ENCODE measurements at regions of chr10 and their contacts with region 1.

Region 1: GRCh38 chr10:102476466-102477141 is 25.3 kb upstream of the C10orf95 start:
- DNase-seq: peak in 2 of 5 donors; percentile 20 to 23
- ATAC-seq: no peak
- H3K4me3 ChIP-seq: no peak overlapping the region
- H3K27ac ChIP-seq: no peak overlapping the region
- H3K4me1 ChIP-seq: peaks cover 0 to 18% (median 6%) of the 10 kb centered on the region in 12 donors
- H3K27me3 ChIP-seq: no peaks in the 10 kb centered on the region
- CTCF ChIP-seq: no peak
- POLR2A ChIP-seq: no peak

Region 2: DNA sequence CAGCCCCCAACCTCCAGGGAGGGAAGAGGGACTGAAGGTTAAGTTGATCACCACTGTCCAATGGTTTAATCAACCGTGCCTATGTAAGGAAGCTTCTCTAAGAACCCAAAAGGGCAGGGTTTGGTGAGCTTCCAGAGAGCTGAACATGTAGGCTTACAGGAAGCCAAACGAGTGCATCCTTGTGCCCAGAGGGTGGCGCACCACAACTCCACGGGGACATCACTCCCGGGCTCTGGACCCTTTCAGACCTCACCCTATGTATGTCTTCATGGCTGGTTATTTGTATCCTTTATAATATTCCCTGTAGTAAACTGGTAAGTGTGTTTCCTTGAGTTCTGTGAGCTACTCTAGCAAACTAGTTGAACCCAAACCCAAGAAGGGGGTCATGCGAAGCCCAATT is 92.6 kb before region 1 on chr10:
- intact Hi-C with region 1: loop called in 1 of 10 experiments (anchors 10 kb)
- DNase-seq: no peak
- ATAC-seq: no peak
- H3K4me3 ChIP-seq: no peak overlapping the region
- H3K27ac ChIP-seq: no peak overlapping the region
- H3K4me1 ChIP-seq: peaks cover 0 to 17% (median 0%) of the 10 kb centered on the region in 12 donors
- H3K27me3 ChIP-seq: no peaks in the 10 kb centered on the region
- CTCF ChIP-seq: no peak
- POLR2A ChIP-seq: no peak

Region 3: DNA sequence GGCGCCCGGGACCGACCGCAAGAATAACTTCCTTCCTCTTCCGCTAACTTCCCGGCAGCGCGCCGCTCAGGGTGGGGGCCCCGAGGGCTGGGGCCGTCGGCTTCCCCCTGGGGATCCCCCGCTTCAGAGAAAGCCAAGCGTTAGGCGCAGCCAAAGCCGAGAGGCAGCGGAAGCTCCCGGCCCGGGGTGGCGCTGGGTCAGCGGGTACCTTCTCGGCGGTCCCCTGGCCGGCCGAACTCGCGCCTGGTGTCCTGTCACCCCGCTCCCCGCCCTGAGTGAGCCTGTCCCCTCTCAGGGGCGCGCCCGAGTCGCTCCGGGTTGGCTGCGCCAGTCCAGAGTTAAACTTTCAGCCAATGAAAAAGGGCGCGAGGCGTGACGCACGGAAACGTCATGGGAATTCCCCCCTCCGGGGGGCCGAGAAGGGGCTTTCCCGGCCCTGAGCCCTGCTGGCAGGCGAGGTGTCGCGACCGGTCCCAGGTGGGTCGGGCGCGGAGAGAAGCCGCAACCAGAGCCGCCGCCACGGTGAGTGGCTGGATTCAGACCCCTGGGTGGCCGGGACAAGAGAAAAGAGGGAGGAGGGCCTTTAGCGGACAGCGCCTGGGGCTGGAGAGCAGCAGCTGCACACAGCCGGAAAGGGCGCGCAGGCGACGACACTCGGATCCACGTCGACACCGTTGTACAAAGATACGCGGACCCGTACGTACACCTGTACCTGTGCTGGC is 82.4 kb before region 1 on chr10:
- intact Hi-C with region 1: loop called in 7 of 10 experiments (anchors 1 to 10 kb)
- DNase-seq: peak; percentile 96 to 98 (median 97)
- ATAC-seq: peak; percentile 84 to 94 (median 92)
- H3K4me3 ChIP-seq: peak overlapping the region; percentile 50 to 91 (median 75)
- H3K27ac ChIP-seq: peak overlapping the region; percentile 89 to 99 (median 96)
- H3K4me1 ChIP-seq: peaks cover 3 to 42% (median 26%) of the 10 kb centered on the region in 12 donors
- H3K27me3 ChIP-seq: no peaks in the 10 kb centered on the region
- CTCF ChIP-seq: peak in 10 of 12 donors; percentile 1 to 98 (median 94)
- POLR2A ChIP-seq: peak in 1 of 2 donors; percentile 81

Region 4: GRCh38 chr10:102399217-102400089 is 77.2 kb before region 1 on chr10:
- intact Hi-C with region 1: loop called in 6 of 10 experiments (anchors 1 to 5 kb)
- DNase-seq: peak; percentile 87 to 95 (median 92)
- ATAC-seq: peak; percentile 60 to 80 (median 73)
- H3K4me3 ChIP-seq: peak overlapping the region; percentile 18 to 85 (median 70)
- H3K27ac ChIP-seq: peak overlapping the region; percentile 70 to 99 (median 86)
- H3K4me1 ChIP-seq: peaks cover 0 to 44% (median 26%) of the 10 kb centered on the region in 12 donors
- H3K27me3 ChIP-seq: no peaks in the 10 kb centered on the region
- CTCF ChIP-seq: peak; percentile 92 to 99 (median 95)
- POLR2A ChIP-seq: peak in 1 of 2 donors; percentile 46

Region 5: DNA sequence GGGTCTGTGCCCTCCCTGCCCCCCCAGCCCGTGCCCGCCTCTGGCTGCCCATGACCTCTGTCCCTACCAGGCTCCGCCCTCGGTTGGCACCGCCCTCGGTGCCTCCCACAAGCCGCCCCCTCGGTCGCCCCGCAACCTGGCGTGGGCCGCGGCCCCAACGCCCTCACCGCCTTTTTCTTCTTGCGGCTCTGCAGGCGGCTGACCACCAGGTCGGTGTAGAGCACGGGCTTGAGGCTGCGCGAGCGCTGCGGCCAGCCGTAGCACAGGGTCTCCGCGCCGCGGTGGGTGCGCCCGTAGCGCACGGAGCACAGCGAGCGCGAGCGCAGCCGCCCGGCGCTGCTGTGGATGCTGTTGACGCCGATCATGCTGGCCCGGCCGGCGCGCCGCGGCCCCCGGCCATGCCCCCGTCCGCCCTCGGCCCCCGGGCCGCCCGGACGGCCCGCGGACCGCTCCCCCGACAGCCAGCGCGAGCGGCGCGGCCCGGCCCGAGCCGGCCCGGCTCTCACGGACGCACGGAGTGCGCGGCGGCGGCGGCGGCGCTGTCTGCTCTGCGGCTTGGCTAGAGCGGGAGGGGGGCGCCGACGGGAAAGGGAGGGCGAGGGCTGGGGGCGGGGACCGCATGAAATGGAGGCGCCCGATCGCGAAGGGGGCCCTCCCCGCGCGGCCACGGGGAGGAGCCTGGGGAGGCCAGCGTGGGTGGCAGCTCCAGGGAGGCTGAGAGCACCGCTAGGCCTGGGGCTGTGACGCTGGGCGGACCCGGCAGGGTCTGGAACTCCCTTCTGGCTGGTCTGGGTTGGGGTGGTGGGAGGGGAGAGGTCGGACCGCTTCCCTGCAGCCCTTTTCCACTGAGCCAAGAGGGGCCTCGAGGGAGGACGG is 67.6 kb before region 1 on chr10:
- intact Hi-C with region 1: loop called in 1 of 10 experiments (anchors 5 kb)
- DNase-seq: peak in 2 of 5 donors; percentile 36 to 56
- ATAC-seq: peak in 3 of 4 donors; percentile 6 to 60 (median 21)
- H3K4me3 ChIP-seq: peak overlapping the region in 10 of 12 donors; percentile 17 to 53 (median 42)
- H3K27ac ChIP-seq: peak overlapping the region in 1 of 12 donors; percentile 99
- H3K4me1 ChIP-seq: peaks cover 0 to 26% (median 9%) of the 10 kb centered on the region in 12 donors
- H3K27me3 ChIP-seq: peaks cover 20 to 66% (median 39%) of the 10 kb centered on the region in 9 donors
- CTCF ChIP-seq: no peak
- POLR2A ChIP-seq: no peak

Measured in heart left ventricle (tissue), 16 donors.